Left ventricle myocardium inferior (tissue), 1 donor: ENCODE measurements at regions of chr9 and their contacts with region 1.

Region 1: GRCh38 chr9:35789541-35789940 is 1.9 kb upstream of the NPR2 start:
- DNase-seq: no peak
- H3K4me3 ChIP-seq: no peak overlapping the region
- H3K27ac ChIP-seq: no peak overlapping the region
- H3K4me1 ChIP-seq: peaks cover 40% of the 10 kb centered on the region
- H3K27me3 ChIP-seq: no peaks in the 10 kb centered on the region
- CTCF ChIP-seq: no peak

Region 2: DNA sequence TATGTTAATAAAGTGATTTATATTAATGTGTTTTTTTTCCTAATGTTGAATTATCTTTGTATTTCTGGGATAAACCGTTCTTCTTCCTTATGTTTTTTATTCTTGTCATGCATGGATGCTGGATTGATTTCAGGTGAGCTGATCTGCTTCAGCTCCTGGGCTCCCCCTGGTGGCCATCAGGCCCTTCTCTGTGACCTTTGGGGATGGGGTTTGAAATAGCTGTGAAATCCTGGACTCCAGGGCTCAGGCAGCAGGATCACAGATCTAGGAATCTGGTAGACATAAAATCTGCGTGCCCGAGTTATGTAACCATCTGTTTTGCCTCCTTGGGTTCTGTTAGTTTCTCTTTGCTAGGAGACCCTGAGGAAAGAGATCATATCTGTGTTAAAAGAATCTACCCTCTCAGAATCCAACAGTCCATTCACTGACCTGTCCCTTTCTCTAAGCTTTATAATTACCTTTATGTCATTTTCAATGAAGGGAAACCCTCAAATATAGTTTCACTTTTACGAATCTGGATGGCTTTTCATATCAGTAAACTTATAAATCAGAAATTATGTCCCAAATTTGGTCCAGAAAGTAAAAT is 92.8 kb after region 1 on chr9:
- intact Hi-C with region 1: loop called (anchors 2 kb)
- DNase-seq: peak; percentile 85
- H3K4me3 ChIP-seq: no peak overlapping the region
- H3K27ac ChIP-seq: no peak overlapping the region
- H3K4me1 ChIP-seq: no peaks in the 10 kb centered on the region
- H3K27me3 ChIP-seq: no peaks in the 10 kb centered on the region
- CTCF ChIP-seq: peak; percentile 99